ENCODE measurements at regions of chr10 and their contacts with region 1.

Region 1: DNA sequence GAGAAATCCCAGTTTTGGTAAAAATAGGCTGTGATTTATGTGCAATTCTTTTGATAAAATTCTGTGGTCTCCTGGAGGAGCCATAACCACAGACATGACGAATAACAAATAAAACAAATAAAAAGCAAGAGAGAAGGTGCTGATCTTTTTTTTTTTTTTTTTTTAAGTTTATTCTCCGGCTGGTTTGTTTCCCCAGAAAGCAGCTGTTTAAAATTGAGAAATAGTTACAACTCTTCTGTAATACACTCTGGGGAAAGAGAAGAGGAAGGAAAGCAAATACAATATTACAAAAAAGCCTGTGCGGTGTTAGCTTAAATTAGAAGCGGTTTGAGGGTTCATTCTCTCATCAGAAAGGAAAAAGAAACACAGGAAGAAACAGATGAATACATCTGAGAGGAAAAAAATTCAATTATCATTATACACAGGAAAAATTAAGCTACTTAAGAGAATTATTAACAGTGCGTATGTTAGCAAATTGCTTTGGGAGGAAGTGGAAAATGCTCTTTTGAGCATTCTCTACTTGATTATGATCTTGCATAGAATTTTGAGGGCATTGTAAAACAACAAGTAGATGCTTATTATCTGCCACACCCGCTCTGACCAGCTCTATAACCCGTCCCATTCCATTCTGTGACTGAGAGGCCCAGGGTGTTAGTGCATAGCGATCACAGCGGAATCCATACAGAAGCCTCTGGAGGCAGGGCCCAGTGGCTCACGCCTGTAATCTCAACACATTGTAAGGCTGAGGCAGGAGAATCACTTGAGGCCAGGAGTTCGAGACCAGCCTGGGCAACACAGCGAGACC is 40.6 kb upstream of the WAC start:
- DNase-seq: peak; percentile 26 to 63
- H3K4me3 ChIP-seq: no peak overlapping the region
- H3K4me3 Mint-ChIP-seq: no peak overlapping the region
- H3K27ac Mint-ChIP-seq: no peak overlapping the region
- H3K4me1 ChIP-seq: peaks cover 26% of the 10 kb centered on the region
- H3K4me1 Mint-ChIP-seq: peaks cover 25% of the 10 kb centered on the region
- H3K27me3 ChIP-seq: no peaks in the 10 kb centered on the region
- H3K27me3 Mint-ChIP-seq: no peaks in the 10 kb centered on the region
- CTCF ChIP-seq: no peak

Region 2: DNA sequence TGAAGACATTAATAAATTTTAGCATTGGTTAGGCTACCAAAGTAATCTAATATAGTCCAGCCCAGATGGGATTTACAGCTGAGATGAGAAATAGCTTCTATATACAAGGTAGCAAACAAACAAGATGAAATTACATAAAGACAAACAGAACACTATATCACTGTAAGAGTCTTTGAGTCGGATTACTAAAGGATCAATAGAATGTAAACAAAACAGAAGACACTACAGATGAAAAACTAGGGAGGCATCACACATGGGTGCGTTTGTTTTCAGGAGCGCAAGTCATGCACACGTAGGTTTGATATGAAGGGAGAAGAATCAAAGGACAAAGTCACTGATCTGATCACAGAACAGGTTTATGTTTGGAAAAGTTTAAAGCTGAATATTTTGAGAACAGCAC is 215.9 kb before region 1 on chr10:
- CTCF ChIA-PET with region 1: no interaction called
- POLR2A ChIA-PET with region 1: no interaction called
- intact Hi-C with region 1: loop called (anchors 10 kb)
- DNase-seq: no peak
- H3K4me3 ChIP-seq: no peak overlapping the region
- H3K4me3 Mint-ChIP-seq: no peak overlapping the region
- H3K27ac Mint-ChIP-seq: no peak overlapping the region
- H3K4me1 ChIP-seq: peaks cover 11% of the 10 kb centered on the region; the same call in 1 of the 2 replicates
- H3K4me1 Mint-ChIP-seq: peaks cover 16% of the 10 kb centered on the region
- H3K27me3 ChIP-seq: no peaks in the 10 kb centered on the region
- H3K27me3 Mint-ChIP-seq: no peaks in the 10 kb centered on the region
- CTCF ChIP-seq: no peak

Region 3: DNA sequence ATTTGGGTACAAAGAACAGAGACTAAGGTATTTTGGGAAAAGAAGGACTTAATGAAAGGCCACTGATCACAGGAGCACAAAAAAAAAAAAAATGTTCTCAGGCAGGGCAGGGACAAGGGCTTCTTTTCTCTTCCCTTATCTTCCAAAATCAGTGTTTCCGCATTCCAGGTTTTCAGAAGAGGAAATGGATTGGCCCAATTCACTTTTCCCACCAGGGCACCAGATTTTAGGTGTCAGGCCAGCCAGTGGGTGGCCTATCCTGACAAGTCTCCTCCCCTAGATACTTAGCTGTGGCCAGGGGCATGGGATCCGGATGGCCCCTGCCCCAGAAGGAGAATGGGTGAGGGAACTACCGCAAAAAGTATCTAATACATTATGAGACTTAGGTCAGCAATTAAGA is 48.3 kb before region 1 on chr10:
- CTCF ChIA-PET with region 1: no interaction called
- POLR2A ChIA-PET with region 1: no interaction called
- intact Hi-C with region 1: loop called (anchors 2 kb)
- DNase-seq: peak in 1 of 2 experiments; percentile 24
- H3K4me3 ChIP-seq: no peak overlapping the region
- H3K4me3 Mint-ChIP-seq: no peak overlapping the region
- H3K27ac Mint-ChIP-seq: no peak overlapping the region
- H3K4me1 ChIP-seq: peaks cover 10% of the 10 kb centered on the region
- H3K4me1 Mint-ChIP-seq: peaks cover 10% of the 10 kb centered on the region
- H3K27me3 ChIP-seq: no peaks in the 10 kb centered on the region
- H3K27me3 Mint-ChIP-seq: no peaks in the 10 kb centered on the region
- CTCF ChIP-seq: no peak

Region 4: GRCh38 chr10:28532383-28533175 is 40.3 kb after region 1 on chr10 and contains the start of gene WAC:
- CTCF ChIA-PET with region 1: no interaction called
- POLR2A ChIA-PET with region 1: no interaction called
- intact Hi-C with region 1: loop called (anchors 1 kb)
- DNase-seq: peak; percentile 97 to 99
- H3K4me3 ChIP-seq: peak within 1 kb of the TSS; percentile 98
- H3K4me3 Mint-ChIP-seq: peak within 1 kb of the TSS; percentile 100
- H3K27ac Mint-ChIP-seq: peak within 1 kb of the TSS; percentile 100
- H3K4me1 ChIP-seq: peaks cover 16% of the 10 kb centered on the region
- H3K4me1 Mint-ChIP-seq: peaks cover 24% of the 10 kb centered on the region
- H3K27me3 ChIP-seq: no peaks in the 10 kb centered on the region
- H3K27me3 Mint-ChIP-seq: no peaks in the 10 kb centered on the region
- CTCF ChIP-seq: peak in 1 of 2 experiments; percentile 49
- total RNA-seq, gene WAC: 196 TPM in 2 replicates

Measured in Caco-2 (cell line).